Esophagus muscularis mucosa (tissue), 4 donors: ENCODE measurements at regions of chr10 and their contacts with region 1.

Region 1: GRCh38 chr10:69237528-69238159 is 17.5 kb downstream of the HKDC1 start:
- DNase-seq: peak; percentile 96
- H3K4me3 ChIP-seq: no peak overlapping the region
- H3K27ac ChIP-seq: no peak overlapping the region
- H3K4me1 ChIP-seq: peaks cover 4 to 21% (median 11%) of the 10 kb centered on the region in 4 donors
- H3K27me3 ChIP-seq: no peaks in the 10 kb centered on the region
- CTCF ChIP-seq: peak; percentile 91 to 98 (median 91)
- EP300 ChIP-seq: no peak
- POLR2A ChIP-seq: no peak

Region 2: DNA sequence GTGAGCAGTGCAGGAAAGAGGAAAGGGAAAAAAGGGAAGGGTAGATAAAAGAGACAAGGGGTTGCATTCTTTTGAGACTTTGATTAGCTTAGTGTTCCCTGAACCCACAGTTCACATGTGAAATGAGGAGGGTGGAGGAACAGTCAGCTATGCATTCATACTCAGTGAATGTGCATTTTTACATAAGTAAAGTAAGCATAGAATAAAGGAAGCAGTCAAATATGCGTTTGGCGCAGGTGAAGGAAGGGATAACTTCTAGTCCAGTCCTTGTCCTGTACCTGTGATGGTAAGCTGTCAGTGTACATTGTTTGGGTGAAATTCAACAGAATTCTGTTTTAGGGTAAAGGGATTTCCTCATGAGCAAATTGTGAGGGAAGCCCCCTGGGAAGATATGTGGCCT is 68.8 kb after region 1 on chr10:
- intact Hi-C with region 1: no loop called
- DNase-seq: no peak
- H3K4me3 ChIP-seq: no peak overlapping the region
- H3K27ac ChIP-seq: no peak overlapping the region
- H3K4me1 ChIP-seq: peaks cover 0 to 1% (median 0%) of the 10 kb centered on the region in 4 donors
- H3K27me3 ChIP-seq: no peaks in the 10 kb centered on the region
- CTCF ChIP-seq: no peak
- EP300 ChIP-seq: no peak
- POLR2A ChIP-seq: no peak

Region 3: DNA sequence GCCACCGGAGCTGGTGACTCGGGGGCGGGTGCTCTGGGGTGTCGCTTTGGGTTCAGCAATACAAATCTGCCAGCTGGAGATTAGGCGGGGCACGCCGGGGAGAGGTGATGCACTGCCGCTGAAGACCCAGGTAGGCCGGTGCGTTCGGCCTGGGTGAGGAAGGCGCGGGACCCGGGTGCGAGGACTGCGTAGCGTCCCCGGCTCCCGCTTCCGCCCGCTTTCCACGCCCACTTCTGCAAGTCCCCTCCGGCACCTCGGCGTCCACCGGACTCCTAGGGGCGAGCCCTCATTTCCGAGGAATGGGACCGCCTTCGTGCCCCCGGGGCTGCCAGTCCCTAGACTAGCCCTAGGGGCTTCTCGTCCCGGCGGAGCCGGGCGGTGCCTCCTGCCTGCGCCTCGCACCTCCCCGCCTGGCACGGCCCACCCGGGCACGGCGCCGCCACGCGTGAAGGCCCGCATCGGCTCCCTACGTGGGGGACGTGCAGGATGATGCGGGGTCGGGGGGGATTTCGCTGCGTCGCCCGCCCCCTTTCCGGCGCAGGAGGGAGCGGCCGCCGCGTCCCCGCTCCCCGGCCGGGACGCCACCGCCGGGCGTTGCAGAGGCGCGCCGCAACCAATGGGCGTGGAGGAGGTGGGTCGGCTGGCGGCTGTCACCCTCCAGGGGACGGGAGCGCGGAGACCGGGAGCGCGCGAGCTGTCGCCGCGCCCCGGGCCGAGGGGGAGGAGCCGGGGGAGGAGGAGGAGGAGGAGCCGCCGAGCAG is 80.6 kb after region 1 on chr10:
- intact Hi-C with region 1: loop called (anchors 5 kb)
- DNase-seq: peak; percentile 96
- H3K4me3 ChIP-seq: peak overlapping the region; percentile 78 to 99 (median 89)
- H3K27ac ChIP-seq: peak overlapping the region; percentile 88 to 98 (median 96)
- H3K4me1 ChIP-seq: peaks cover 38 to 60% (median 48%) of the 10 kb centered on the region in 4 donors
- H3K27me3 ChIP-seq: peaks cover 0 to 3% (median 0%) of the 10 kb centered on the region in 4 donors
- CTCF ChIP-seq: peak in 1 of 3 experiments; percentile 8
- EP300 ChIP-seq: no peak
- POLR2A ChIP-seq: no peak

Region 4: GRCh38 chr10:69392481-69393000 is 154.9 kb after region 1 on chr10:
- intact Hi-C with region 1: loop called (anchors 1 kb)
- DNase-seq: peak; percentile 96
- H3K4me3 ChIP-seq: no peak overlapping the region
- H3K27ac ChIP-seq: peak overlapping the region; percentile 35 to 65 (median 40)
- H3K4me1 ChIP-seq: peaks cover 10 to 27% (median 23%) of the 10 kb centered on the region in 4 donors
- H3K27me3 ChIP-seq: no peaks in the 10 kb centered on the region
- CTCF ChIP-seq: peak; percentile 97 to 99 (median 99)
- EP300 ChIP-seq: no peak
- POLR2A ChIP-seq: no peak

Region 5: DNA sequence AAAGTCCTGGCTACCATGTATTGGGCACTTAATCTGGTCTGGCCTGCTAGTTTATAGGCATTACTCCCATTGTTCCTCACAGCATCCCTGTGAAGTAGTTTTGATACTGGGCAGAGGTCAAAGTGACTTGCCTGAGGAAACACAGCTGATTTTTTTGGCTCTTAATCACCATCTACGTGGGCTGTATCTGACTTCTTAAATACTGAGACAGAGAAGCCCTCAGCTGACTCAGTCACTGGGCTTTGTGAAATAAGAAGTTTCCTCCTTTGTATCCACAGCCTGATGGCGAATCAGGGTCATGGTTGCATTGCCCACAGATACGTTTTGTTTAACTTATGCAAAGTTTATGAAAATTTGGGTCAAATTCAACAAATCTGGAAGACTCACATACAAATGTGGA is 165.9 kb after region 1 on chr10:
- intact Hi-C with region 1: no loop called
- DNase-seq: no peak
- H3K4me3 ChIP-seq: no peak overlapping the region
- H3K27ac ChIP-seq: peak overlapping the region in 3 of 4 donors; percentile 1 to 59 (median 19)
- H3K4me1 ChIP-seq: peaks cover 32 to 69% (median 56%) of the 10 kb centered on the region in 4 donors
- H3K27me3 ChIP-seq: no peaks in the 10 kb centered on the region
- CTCF ChIP-seq: no peak
- EP300 ChIP-seq: no peak
- POLR2A ChIP-seq: no peak